Tibial artery (tissue), 4 donors: ENCODE measurements at regions of chr15 and their contacts with region 1.

Region 1: DNA sequence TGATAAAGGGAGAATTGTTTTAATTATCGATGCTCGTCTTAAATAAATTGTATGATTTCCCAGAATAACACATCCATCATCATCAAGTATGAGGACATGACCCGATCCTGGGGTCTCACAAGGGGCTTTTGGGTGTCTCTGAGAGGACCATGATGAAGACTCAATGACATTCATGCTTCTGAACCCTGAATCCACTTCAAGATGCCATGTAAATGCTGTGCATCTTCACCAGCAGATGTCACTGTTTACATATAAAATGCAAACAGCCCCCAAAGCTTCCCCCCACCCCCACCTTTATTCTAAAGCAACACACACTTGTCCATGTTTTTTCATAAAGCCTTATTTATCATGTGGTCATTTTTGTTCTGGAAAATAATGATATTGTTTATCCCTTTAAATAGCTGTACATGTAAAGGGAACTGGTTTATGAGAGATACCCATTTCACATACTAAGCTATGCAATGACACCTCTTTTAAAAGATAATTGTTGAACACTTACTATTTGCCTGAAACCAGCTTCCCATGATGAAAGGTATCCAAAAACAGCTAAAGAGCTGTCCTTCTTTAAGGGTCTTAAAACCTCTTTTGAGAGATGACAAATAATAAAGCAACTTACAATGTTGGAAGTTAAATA is 69.7 kb upstream of the UBE3A start:
- DNase-seq: no peak
- H3K4me3 ChIP-seq: no peak overlapping the region
- H3K27ac ChIP-seq: no peak overlapping the region
- H3K4me1 ChIP-seq: peaks cover 0 to 5% (median 0%) of the 10 kb centered on the region in 4 donors
- H3K27me3 ChIP-seq: no peaks in the 10 kb centered on the region
- CTCF ChIP-seq: peak; percentile 59 to 78

Region 2: GRCh38 chr15:25670025-25670554 is 161.6 kb after region 1 on chr15:
- intact Hi-C with region 1: loop called (anchors 10 kb)
- DNase-seq: peak; percentile 73 to 90
- H3K4me3 ChIP-seq: peak overlapping the region; percentile 5
- H3K27ac ChIP-seq: peak overlapping the region; percentile 55 to 60
- H3K4me1 ChIP-seq: peaks cover 0 to 72% (median 50%) of the 10 kb centered on the region in 4 donors
- H3K27me3 ChIP-seq: no peaks in the 10 kb centered on the region
- CTCF ChIP-seq: peak; percentile 17 to 24

Region 3: DNA sequence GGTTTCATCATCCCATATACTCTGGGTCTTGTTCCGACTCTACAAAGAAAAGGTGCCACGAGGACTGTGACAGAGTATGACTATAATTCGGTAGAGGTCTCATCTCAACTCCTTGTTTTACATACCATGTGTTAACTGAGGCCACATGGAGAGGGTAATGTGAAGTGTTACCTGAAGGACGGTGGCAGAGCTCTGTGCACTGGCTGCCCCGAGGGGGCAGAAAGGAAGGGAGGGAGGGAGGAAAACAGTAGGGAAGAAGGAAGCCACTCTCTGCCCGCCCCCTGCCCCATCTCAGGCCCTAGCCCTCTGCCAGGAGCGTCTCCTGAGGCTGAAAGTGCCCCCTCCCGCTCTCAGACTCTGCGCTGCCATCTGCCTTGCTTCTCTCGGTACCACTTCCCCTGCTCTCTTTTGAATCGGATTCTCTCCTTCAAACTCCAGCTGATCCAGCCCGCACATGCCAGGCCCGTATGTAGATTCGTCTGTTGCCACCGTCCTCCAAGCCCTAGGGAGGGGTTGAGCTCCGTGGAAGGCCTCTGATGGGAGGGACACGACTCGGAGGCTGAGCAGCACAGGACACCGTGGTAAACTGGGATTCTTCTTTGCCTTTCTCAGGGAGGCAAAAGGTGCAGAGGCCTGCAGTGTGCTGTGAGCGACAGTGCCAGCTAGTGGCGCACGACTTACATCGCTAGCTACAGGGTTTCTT is 425.1 kb after region 1 on chr15:
- intact Hi-C with region 1: loop called (anchors 5 kb)
- DNase-seq: peak; percentile 69 to 88
- H3K4me3 ChIP-seq: peak overlapping the region; percentile 27 to 36
- H3K27ac ChIP-seq: peak overlapping the region; percentile 42 to 55
- H3K4me1 ChIP-seq: peaks cover 0 to 10% (median 6%) of the 10 kb centered on the region in 4 donors
- H3K27me3 ChIP-seq: no peaks in the 10 kb centered on the region
- CTCF ChIP-seq: peak; percentile 67 to 73

Region 4: DNA sequence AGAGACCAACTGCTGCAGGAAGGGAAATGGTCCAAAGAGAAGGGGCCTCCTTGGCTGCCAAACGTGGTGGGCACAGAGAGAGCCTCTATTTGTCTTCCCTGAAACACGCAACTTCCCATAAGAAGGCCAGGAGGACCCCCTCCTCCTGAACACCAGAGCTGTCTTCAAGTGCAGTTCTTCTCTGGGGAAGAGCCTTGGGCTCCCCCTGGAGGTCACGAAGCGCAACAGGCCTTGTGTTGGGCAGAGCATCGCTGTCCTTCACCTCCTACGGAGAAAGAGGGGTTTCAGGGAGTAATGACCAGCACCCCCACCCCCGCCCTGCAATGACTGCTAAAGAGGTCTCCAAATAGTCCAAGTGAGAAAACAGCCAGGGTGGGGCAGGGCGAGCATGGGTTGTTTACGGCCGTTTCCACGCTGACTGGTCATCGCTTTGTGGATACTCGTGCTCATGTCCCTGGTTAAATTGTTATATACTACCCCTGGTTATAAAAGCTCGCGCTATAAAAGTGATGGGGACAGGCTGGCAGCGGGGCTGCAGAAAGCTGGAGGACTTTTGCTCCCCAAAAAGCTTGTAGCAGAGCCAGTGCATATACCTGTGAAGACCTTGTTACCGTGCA is 752.1 kb after region 1 on chr15:
- intact Hi-C with region 1: loop called (anchors 5 kb)
- DNase-seq: no peak
- H3K4me3 ChIP-seq: no peak overlapping the region
- H3K27ac ChIP-seq: no peak overlapping the region
- H3K4me1 ChIP-seq: no peaks in the 10 kb centered on the region
- H3K27me3 ChIP-seq: peaks cover 0 to 6% of the 10 kb centered on the region in 2 donors
- CTCF ChIP-seq: peak; percentile 71 to 78

Region 5: DNA sequence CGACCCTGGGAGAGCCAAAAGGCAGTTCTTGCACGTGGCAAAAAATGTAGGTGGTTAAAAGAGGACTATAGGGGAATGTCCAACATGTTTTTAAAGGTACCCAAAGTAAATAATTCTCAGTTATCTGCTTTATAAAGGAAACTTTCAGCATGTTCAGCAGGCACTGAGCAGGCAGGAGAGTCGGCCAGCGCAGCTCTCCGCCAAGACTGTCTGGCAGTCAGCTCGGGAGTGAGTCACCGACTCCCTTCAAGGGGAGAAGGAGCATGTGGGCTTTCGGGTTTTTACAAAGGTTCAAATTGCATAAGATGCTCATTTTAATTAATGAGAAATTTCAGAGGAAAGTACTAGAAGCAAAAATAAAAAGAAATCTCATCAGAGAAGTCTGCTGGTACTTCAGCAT is 1365.4 kb after region 1 on chr15:
- intact Hi-C with region 1: loop called (anchors 5 kb)
- DNase-seq: peak in 1 of 2 donors; percentile 33
- H3K4me3 ChIP-seq: no peak overlapping the region
- H3K27ac ChIP-seq: no peak overlapping the region
- H3K4me1 ChIP-seq: peaks cover 0 to 2% (median 0%) of the 10 kb centered on the region in 4 donors
- H3K27me3 ChIP-seq: peaks cover 0 to 16% of the 10 kb centered on the region in 2 donors
- CTCF ChIP-seq: no peak